Activated CD8-positive, alpha-beta T cell treated with anti-CD3 and anti-CD28 coated beads, Interleukin-2, amount 10 ng/mL, durations not matched to agents 7 days and 5 days (primary cell): ENCODE measurements at regions of chr17 and their contacts with region 1.

Region 1: GRCh38 chr17:51153210-51154072 is at the start of gene NME1:
- DNase-seq: peak; percentile 98
- ATAC-seq: peak; percentile 95
- H3K4me3 Mint-ChIP-seq: no peak within 1 kb of the TSS
- H3K27ac Mint-ChIP-seq: no peak within 1 kb of the TSS
- H3K4me1 Mint-ChIP-seq: peaks cover 12% of the 10 kb centered on the region
- H3K27me3 Mint-ChIP-seq: no peaks in the 10 kb centered on the region
- total RNA-seq, gene NME1: 148 to 150 TPM

Region 2: DNA sequence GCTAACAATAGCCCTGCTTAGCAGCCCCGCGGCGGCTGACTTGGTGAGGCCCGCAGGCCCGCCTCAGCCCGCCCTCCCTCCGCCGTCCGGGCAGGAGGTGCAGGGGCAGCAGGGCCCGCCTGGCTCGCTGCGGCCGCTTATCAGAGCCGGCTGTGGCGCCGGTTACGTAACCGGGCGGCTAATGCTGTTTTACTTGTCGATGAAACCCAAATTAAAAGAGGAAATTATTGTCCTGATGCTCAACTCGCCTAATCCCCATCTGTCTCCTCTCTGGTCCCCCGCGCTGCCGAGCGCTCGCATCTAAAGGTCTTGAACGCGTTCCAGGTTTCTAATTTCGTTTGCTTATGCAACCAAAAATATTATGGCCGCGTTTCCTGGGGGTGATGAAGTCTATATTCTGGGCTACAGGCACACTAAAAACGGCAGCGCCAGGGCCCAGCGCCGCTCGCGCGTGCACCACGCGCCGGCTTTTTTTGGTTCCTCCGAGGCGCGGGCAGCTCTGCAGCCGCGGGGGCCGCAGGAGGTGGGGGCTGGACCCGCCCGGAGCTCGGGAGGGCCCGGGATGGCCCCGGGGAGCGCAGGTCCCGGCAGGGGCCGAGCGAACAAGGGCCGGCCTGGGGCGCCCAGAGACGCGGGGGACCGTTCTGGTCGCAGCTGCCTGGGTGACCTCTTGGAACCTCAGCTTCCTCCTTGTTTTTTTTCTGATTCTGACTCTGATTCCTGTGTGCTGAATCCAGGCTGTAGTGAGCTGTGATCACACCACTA is 222.1 kb before region 1 on chr17:
- CTCF ChIA-PET with region 1: no interaction called
- POLR2A ChIA-PET with region 1: no interaction called
- DNase-seq: peak; percentile 50
- ATAC-seq: peak; percentile 73
- H3K4me3 Mint-ChIP-seq: peak overlapping the region; percentile 68
- H3K27ac Mint-ChIP-seq: peak overlapping the region; percentile 67
- H3K4me1 Mint-ChIP-seq: peaks cover 33% of the 10 kb centered on the region
- H3K27me3 Mint-ChIP-seq: peaks cover 33% of the 10 kb centered on the region

Region 3: GRCh38 chr17:51015145-51015558 is 138.3 kb before region 1 on chr17:
- CTCF ChIA-PET with region 1: interaction called, 10 read pairs
- POLR2A ChIA-PET with region 1: no interaction called
- DNase-seq: no peak
- ATAC-seq: no peak
- H3K4me3 Mint-ChIP-seq: no peak overlapping the region
- H3K27ac Mint-ChIP-seq: no peak overlapping the region
- H3K4me1 Mint-ChIP-seq: no peaks in the 10 kb centered on the region
- H3K27me3 Mint-ChIP-seq: no peaks in the 10 kb centered on the region

Region 4: DNA sequence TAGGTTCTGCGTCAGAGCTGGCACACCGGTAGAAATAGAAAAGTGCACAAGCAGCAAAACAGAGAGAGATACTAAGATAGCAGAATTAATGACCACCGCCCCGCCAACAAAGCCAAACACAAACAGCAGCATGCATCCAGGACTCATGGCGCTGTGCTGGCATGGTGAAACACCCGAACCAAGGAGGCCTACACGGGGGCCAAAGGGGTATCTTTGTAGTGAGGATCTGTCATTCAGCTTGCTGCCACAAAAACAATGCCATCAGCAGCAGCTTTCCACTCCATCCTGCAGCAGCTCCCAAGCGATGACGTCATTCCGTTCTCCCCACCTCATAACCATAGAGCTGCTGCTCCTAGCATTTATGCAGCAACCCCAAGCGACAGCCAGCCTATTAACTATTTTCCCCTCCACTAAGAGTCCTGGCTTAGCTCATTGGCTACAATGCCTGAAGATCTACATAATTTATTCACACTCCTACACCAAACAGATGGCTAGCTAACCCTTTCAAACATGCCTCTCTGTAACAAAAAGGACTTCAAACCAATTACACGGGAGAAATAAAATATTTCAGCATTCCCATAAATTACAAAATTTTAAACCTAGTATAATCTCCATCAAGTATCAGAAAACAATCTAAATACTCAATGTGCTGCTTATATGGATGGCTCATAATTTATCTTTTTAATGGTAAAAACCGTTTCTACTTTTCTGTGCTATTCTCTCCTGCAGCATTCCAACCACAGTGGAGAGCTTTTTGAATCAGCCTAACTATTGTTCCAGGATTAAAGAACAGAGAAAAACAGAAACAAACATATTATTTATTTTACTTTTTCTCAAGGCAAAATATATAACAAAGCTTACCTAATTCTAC is 106.7 kb before region 1 on chr17:
- CTCF ChIA-PET with region 1: interaction called, 12 read pairs
- POLR2A ChIA-PET with region 1: no interaction called
- DNase-seq: no peak
- ATAC-seq: no peak
- H3K4me3 Mint-ChIP-seq: no peak overlapping the region
- H3K27ac Mint-ChIP-seq: no peak overlapping the region
- H3K4me1 Mint-ChIP-seq: no peaks in the 10 kb centered on the region
- H3K27me3 Mint-ChIP-seq: no peaks in the 10 kb centered on the region

Region 5: GRCh38 chr17:51078009-51078592 is 75.3 kb before region 1 on chr17:
- CTCF ChIA-PET with region 1: no interaction called
- POLR2A ChIA-PET with region 1: no interaction called
- DNase-seq: no peak
- ATAC-seq: no peak
- H3K4me3 Mint-ChIP-seq: no peak overlapping the region
- H3K27ac Mint-ChIP-seq: no peak overlapping the region
- H3K4me1 Mint-ChIP-seq: no peaks in the 10 kb centered on the region
- H3K27me3 Mint-ChIP-seq: no peaks in the 10 kb centered on the region

Region 6: DNA sequence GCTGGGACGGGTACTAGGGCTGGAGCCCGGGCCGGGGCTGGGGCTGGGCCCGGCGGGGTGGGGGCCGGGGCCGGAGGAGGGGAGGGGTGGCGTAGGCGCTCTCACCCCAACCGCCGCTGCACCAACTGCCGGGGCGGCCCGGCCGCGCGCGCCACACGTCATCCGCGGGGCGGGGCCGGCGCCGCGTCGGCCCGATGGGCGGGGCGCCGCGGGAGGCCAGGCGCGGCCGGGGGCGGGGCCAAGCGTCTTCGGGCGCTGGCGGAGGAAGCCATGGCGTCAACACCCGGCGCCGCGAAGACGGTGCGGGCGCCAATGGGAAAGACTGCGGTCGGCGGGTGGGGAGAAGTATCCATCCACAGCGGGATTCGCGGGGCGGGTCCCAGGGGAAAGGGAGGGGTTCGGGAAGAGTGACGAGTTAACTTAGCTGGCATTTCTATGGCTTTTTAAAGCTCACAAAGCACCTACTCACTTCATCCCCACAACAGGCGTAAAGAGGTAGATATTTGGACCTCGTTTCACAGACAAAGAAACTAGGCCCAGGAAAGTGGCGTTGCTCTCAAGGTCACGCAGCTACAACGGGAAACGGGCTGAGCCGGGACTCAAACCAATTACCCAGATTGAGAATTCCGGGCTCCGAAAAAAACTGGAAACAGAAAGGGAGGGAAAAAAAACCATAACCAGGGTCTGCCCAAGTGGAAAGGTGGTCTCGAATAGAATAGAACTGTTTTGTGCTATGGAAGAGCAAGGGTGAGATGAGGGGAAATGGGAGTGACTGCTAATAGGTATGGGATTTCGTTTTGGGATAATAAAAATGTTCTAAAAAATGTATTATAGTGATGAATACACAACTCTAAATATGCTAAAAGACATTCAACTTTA is 32.5 kb before region 1 on chr17 and contains the start of gene SPAG9:
- CTCF ChIA-PET with region 1: interaction called, 26 read pairs
- POLR2A ChIA-PET with region 1: interaction called, 17 read pairs
- DNase-seq: peak; percentile 93
- ATAC-seq: peak; percentile 81
- H3K4me3 Mint-ChIP-seq: peak within 1 kb of the TSS; percentile 93
- H3K27ac Mint-ChIP-seq: peak within 1 kb of the TSS; percentile 98
- H3K4me1 Mint-ChIP-seq: peaks cover 51% of the 10 kb centered on the region
- H3K27me3 Mint-ChIP-seq: no peaks in the 10 kb centered on the region
- total RNA-seq, gene SPAG9: 39.2 to 42.1 TPM

Region 7: DNA sequence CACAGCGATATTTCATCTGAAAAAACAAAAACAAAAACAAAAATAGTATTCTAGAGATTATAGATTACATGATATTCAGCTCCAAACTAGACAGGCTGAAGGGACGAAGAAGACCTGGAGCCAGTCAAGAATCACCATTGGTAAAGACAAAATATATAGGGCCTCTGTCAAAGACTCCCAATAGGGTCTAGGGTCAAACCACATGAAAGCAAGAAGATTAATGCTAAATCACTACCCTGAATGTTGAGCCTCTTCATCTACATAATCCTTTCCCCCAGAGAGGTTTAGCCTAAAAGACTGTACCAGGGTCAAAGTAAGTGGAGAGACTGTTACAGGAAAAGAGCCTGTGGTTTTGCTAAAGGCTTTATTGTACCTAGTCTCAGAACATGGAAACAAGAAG is 10.8 kb before region 1 on chr17:
- CTCF ChIA-PET with region 1: interaction called, 10 read pairs
- POLR2A ChIA-PET with region 1: interaction called, 4 read pairs
- DNase-seq: no peak
- ATAC-seq: no peak
- H3K4me3 Mint-ChIP-seq: no peak overlapping the region
- H3K27ac Mint-ChIP-seq: no peak overlapping the region
- H3K4me1 Mint-ChIP-seq: peaks cover 2% of the 10 kb centered on the region
- H3K27me3 Mint-ChIP-seq: no peaks in the 10 kb centered on the region